Naive thymus-derived CD8-positive, alpha-beta T cell (primary cell): ENCODE measurements at regions of chr19 and their contacts with region 1.

Region 1: GRCh38 chr19:37370880-37371661 is at the start of gene ZNF527:
- DNase-seq: peak; percentile 92 to 98 (median 96)
- ATAC-seq: peak; percentile 95 to 96
- H3K4me3 Mint-ChIP-seq: peak within 1 kb of the TSS; percentile 96 to 100 (median 99)
- H3K27ac Mint-ChIP-seq: peak within 1 kb of the TSS; percentile 78 to 99 (median 98)
- H3K4me1 Mint-ChIP-seq: peaks cover 16 to 27% (median 17%) of the 10 kb centered on the region in 4 donors
- H3K27me3 Mint-ChIP-seq: no peaks in the 10 kb centered on the region
- polyA plus RNA-seq, gene ZNF527: 8.7 to 13.1 (median 10.9) TPM

Region 2: GRCh38 chr19:37313335-37313627 is 57.8 kb before region 1 on chr19:
- POLR2A ChIA-PET with region 1: interaction called, 24 read pairs
- DNase-seq: no peak
- ATAC-seq: no peak
- H3K4me3 Mint-ChIP-seq: peak overlapping the region; percentile 39 to 90 (median 85)
- H3K27ac Mint-ChIP-seq: peak overlapping the region; percentile 29 to 94 (median 84)
- H3K4me1 Mint-ChIP-seq: peaks cover 10 to 24% (median 19%) of the 10 kb centered on the region in 4 donors
- H3K27me3 Mint-ChIP-seq: peaks cover 0 to 19% (median 10%) of the 10 kb centered on the region in 5 donors

Region 3: GRCh38 chr19:37334179-37335071 is 36.6 kb before region 1 on chr19:
- POLR2A ChIA-PET with region 1: interaction called, 19 read pairs
- DNase-seq: peak; percentile 72 to 97 (median 90)
- ATAC-seq: peak; percentile 97 to 98
- H3K4me3 Mint-ChIP-seq: peak overlapping the region; percentile 84 to 97 (median 90)
- H3K27ac Mint-ChIP-seq: peak overlapping the region; percentile 79 to 98 (median 95)
- H3K4me1 Mint-ChIP-seq: peaks cover 9 to 34% (median 27%) of the 10 kb centered on the region in 4 donors
- H3K27me3 Mint-ChIP-seq: no peaks in the 10 kb centered on the region

Region 4: GRCh38 chr19:37355901-37356300 is 15.2 kb before region 1 on chr19:
- POLR2A ChIA-PET with region 1: no interaction called
- DNase-seq: no peak
- ATAC-seq: no peak
- H3K4me3 Mint-ChIP-seq: no peak overlapping the region
- H3K27ac Mint-ChIP-seq: no peak overlapping the region
- H3K4me1 Mint-ChIP-seq: peaks cover 0 to 6% (median 2%) of the 10 kb centered on the region in 4 donors
- H3K27me3 Mint-ChIP-seq: no peaks in the 10 kb centered on the region

Region 5: GRCh38 chr19:37594304-37594981 is 223.4 kb after region 1 on chr19 and contains the starts of genes ZNF540 and ZNF571:
- POLR2A ChIA-PET with region 1: interaction called, 20 read pairs
- DNase-seq: peak; percentile 83 to 96 (median 91)
- ATAC-seq: peak; percentile 91 to 94
- H3K4me3 Mint-ChIP-seq: peak within 1 kb of the TSS; percentile 93 to 99 (median 98)
- H3K27ac Mint-ChIP-seq: peak within 1 kb of the TSS; percentile 96 to 100 (median 98)
- H3K4me1 Mint-ChIP-seq: peaks cover 31 to 41% (median 33%) of the 10 kb centered on the region in 4 donors
- H3K27me3 Mint-ChIP-seq: peaks cover 0 to 3% (median 0%) of the 10 kb centered on the region in 5 donors
- polyA plus RNA-seq, gene ZNF540: 6.6 to 9.1 (median 9.0) TPM
- polyA plus RNA-seq, gene ZNF571: 5.5 to 10.7 (median 6.6) TPM